Adrenal gland (tissue), 19 donors: ENCODE measurements at regions of chr12 and their contacts with region 1.

Region 1: GRCh38 chr12:115916910-115917668 is 360.4 kb downstream of the MED13L start:
- DNase-seq: peak; percentile 19 to 71 (median 49)
- H3K4me3 ChIP-seq: peak overlapping the region in 1 of 4 donors; percentile 48
- H3K27ac ChIP-seq: peak overlapping the region in 1 of 5 donors; percentile 32
- H3K4me1 ChIP-seq: peaks cover 0 to 6% of the 10 kb centered on the region in 2 donors
- H3K27me3 ChIP-seq: peaks cover 5% of the 10 kb centered on the region
- CTCF ChIP-seq: peak; percentile 84 to 98 (median 92)
- POLR2A ChIP-seq: no peak

Region 2: DNA sequence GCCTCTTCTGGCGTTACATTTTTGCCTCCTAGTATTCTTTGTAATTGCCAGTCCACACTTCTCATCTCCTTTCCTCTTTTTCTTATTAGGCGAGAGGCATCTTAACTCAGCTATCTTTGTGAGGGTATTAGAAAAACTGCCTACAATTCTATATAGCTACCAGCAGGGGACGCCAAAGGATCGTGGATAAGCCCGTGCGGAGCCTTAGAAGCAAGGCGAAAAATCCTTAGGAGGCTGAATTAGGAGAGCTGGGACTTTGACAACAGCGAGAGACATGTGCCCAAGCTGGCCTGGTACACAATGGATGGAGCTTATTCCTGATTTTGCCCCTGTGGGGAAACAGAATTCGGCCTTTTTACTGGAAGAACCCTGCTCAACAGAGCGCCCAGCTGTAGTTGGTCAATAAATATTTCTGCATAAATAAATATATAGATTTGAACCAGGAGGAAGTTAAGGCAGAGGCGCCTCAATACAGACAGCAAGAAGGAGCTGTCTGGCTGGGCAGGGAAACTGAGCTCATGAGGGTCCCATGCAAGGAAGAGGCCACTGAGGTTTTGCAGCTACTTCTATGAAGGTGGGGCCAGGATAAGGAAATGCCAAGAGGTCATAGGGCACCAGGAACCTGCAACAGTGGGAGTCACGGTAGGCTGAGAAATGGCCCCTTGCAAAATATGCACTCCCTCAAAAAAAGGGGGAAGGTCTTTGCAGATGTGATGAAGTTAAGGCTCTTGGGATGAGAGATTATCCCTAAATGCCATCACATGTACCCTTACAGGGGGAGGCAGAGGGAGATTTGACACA is 1936.4 kb before region 1 on chr12:
- intact Hi-C with region 1: loop called in 1 of 2 experiments (anchors 10 kb)
- DNase-seq: peak in 6 of 7 donors; percentile 41 to 56 (median 49)
- H3K4me3 ChIP-seq: no peak overlapping the region
- H3K27ac ChIP-seq: no peak overlapping the region
- H3K4me1 ChIP-seq: no peaks in the 10 kb centered on the region
- H3K27me3 ChIP-seq: peaks cover 23% of the 10 kb centered on the region
- CTCF ChIP-seq: peak; percentile 86 to 98 (median 96)
- POLR2A ChIP-seq: no peak

Region 3: DNA sequence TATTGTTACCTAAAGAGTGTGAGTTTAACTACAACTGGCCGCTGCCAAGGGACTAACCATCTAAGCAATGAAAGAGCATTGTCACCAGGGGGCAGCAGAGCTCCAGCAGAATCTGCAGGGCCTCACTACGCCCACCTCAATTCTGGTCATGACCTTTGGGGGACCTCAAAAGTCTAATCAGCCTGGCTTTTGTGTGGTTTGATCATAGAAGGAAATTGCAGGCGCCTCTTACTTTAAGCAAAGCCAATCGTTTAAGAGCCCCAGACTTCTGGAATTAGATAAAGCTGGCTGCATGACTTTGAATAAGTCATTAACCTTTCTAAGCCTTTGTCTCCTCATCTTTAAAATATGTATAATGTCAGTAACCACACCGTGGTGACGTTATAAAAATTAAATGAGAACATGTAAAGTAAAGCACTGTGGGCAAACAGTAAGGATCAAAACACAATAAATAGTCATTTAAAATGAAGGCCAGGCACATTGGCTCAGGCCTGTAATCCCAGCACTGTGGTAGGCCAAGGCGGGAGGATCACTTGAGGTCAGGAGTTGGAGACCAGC is 1291.7 kb before region 1 on chr12:
- intact Hi-C with region 1: loop called (anchors 10 kb)
- DNase-seq: peak; percentile 54 to 76 (median 64)
- H3K4me3 ChIP-seq: no peak overlapping the region
- H3K27ac ChIP-seq: no peak overlapping the region
- H3K4me1 ChIP-seq: no peaks in the 10 kb centered on the region
- H3K27me3 ChIP-seq: no peaks in the 10 kb centered on the region
- CTCF ChIP-seq: peak; percentile 68 to 84 (median 79)
- POLR2A ChIP-seq: no peak

Region 4: GRCh38 chr12:114662512-114663177 is 1254.4 kb before region 1 on chr12:
- intact Hi-C with region 1: loop called in 1 of 2 experiments (anchors 5 kb)
- DNase-seq: peak; percentile 85 to 98 (median 95)
- H3K4me3 ChIP-seq: no peak overlapping the region
- H3K27ac ChIP-seq: peak overlapping the region in 4 of 5 donors; percentile 15 to 82 (median 47)
- H3K4me1 ChIP-seq: peaks cover 10 to 32% of the 10 kb centered on the region in 2 donors
- H3K27me3 ChIP-seq: no peaks in the 10 kb centered on the region
- CTCF ChIP-seq: peak; percentile 90 to 99 (median 97)
- POLR2A ChIP-seq: peak in 1 of 2 donors; percentile 9

Region 5: GRCh38 chr12:115763376-115763775 is 153.7 kb before region 1 on chr12:
- intact Hi-C with region 1: loop called in 1 of 2 experiments (anchors 10 kb)
- DNase-seq: peak in 3 of 7 donors; percentile 8 to 58 (median 24)
- H3K4me3 ChIP-seq: no peak overlapping the region
- H3K27ac ChIP-seq: no peak overlapping the region
- H3K4me1 ChIP-seq: no peaks in the 10 kb centered on the region
- H3K27me3 ChIP-seq: no peaks in the 10 kb centered on the region
- CTCF ChIP-seq: no peak
- POLR2A ChIP-seq: no peak